Astrocyte of the cerebellum (primary cell): ENCODE measurements at regions of chr17 and their contacts with region 1.

Region 1: GRCh38 chr17:65324611-65325342 is 187.6 kb downstream of the RGS9 start:
- DNase-seq: no peak
- H3K4me3 ChIP-seq: no peak overlapping the region
- CTCF ChIP-seq: no peak

Region 2: GRCh38 chr17:65278050-65278819 is 46.5 kb before region 1 on chr17:
- in situ Hi-C with region 1: no loop called
- DNase-seq: peak; percentile 56
- H3K4me3 ChIP-seq: no peak overlapping the region
- CTCF ChIP-seq: peak; percentile 83

Region 3: GRCh38 chr17:65374966-65375365 is 50.2 kb after region 1 on chr17:
- in situ Hi-C with region 1: loop called (anchors 5 kb)
- DNase-seq: no peak
- H3K4me3 ChIP-seq: no peak overlapping the region
- CTCF ChIP-seq: no peak